ENCODE measurements at regions of chr4 and their contacts with region 1.

Region 1: DNA sequence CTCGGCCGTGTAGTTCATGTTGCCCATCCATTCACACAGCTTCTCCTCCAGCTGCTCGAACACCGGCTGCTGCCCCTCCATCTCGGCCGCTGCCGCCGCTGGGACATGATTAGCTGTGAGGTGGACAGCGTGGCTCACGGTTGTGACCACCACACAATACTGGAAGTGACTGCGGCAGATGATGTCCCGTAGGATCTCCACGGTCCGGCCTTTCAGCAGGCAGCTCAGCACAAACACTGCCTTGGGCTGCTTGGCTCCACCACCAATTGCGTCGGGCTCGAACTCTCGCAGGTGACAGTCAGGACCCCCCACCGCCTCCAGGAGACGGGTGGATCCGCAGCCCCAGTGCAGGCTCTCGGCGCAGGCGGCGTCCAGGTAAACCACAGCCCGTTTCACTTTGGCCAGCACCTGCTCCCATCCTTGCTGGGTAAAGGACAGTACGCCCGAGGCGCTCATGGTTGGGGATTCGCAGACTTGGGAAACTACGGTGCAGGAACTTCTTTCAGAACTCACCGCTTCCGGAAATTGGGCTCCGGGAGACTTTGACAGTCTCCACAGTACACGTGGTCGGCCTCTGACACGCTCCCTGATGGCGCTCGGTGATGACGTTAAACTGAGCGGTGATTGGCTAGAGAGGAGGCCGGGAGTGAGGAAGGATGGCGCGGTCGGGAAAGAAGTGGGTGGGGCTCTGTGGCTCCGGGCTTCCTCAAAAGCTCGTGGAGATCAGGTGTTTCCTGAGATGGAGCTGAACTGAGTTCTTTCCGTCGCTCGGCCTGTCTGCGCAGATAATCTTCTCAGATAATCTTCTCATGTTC is at the start of gene SCFD2:
- DNase-seq: peak; percentile 90 to 99 (median 97)
- ATAC-seq: peak; percentile 96
- H3K4me3 ChIP-seq: peak within 1 kb of the TSS; percentile 69 to 77
- H3K4me3 Mint-ChIP-seq: peak within 1 kb of the TSS; percentile 96
- H3K27ac ChIP-seq: peak within 1 kb of the TSS; percentile 76 to 89
- H3K27ac Mint-ChIP-seq: peak within 1 kb of the TSS; percentile 97
- H3K4me1 ChIP-seq: peaks cover 46% of the 10 kb centered on the region
- H3K4me1 Mint-ChIP-seq: peaks cover 59% of the 10 kb centered on the region
- H3K27me3 ChIP-seq: peaks cover 0 to 4% of the 10 kb centered on the region in 2 experiments
- H3K27me3 Mint-ChIP-seq: peaks cover 5% of the 10 kb centered on the region
- CTCF ChIP-seq: no peak
- total RNA-seq, gene SCFD2: 11.0 to 13.7 TPM

Region 2: GRCh38 chr4:52038103-52038912 is 1327.4 kb before region 1 on chr4 and contains the start of gene SGCB:
- CTCF ChIA-PET with region 1: no interaction called
- POLR2A ChIA-PET with region 1: no interaction called
- intact Hi-C with region 1: loop called in 1 of 2 experiments (anchors 5 kb)
- DNase-seq: peak; percentile 29 to 83 (median 72)
- ATAC-seq: peak; percentile 94
- H3K4me3 ChIP-seq: peak within 1 kb of the TSS; percentile 67 to 74
- H3K4me3 Mint-ChIP-seq: peak within 1 kb of the TSS; percentile 85
- H3K27ac ChIP-seq: no peak within 1 kb of the TSS
- H3K27ac Mint-ChIP-seq: peak within 1 kb of the TSS; percentile 19
- H3K4me1 ChIP-seq: peaks cover 14% of the 10 kb centered on the region
- H3K4me1 Mint-ChIP-seq: peaks cover 26% of the 10 kb centered on the region
- H3K27me3 ChIP-seq: no peaks in the 10 kb centered on the region
- H3K27me3 Mint-ChIP-seq: peaks cover 11% of the 10 kb centered on the region
- CTCF ChIP-seq: no peak
- total RNA-seq, gene SGCB: 3.0 to 3.1 TPM

Region 3: DNA sequence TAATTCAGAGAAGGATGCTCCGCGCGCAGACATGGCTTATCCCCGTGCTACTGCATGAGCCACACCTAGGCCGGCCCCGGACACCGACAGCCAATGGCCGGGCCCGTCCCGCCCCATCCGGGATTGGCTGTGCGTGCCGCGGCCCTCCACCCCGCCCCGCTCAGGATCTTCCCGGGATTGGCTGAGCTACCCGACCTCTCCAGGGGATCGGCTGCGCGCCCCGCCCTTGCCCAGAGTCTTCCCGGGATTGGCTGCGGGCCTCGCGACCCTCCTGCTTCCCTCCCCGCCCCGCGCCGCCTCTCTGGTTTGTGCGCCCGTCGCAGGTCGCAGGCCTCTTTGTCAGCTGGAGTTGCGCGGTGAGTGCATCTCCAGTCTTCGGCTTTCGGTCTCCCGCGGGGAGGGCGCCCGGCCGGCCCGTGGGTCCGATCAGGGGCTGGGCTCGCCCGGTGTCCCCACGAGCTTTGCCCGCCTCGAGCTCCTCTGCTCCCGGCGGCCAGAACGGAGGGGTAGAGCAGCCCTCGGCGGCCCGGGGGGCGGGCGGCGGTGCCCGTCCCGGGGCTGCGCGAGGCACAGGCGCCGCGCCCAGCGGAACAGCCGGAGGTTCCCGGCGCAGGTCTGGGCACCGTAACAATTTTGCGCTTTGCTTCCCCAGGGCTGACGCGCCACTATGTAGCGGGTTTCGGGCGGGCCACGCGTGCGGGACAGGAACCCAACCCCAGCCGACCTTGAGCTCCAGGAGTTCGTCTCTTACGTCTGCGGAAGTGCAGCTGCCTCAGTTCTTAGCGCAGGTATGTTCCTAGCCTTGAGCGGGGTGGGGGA is 653.3 kb before region 1 on chr4:
- CTCF ChIA-PET with region 1: no interaction called
- POLR2A ChIA-PET with region 1: no interaction called
- intact Hi-C with region 1: loop called (anchors 2 to 5 kb)
- DNase-seq: peak; percentile 90 to 97 (median 95)
- ATAC-seq: peak; percentile 89
- H3K4me3 ChIP-seq: peak overlapping the region; percentile 58 to 76
- H3K4me3 Mint-ChIP-seq: peak overlapping the region; percentile 92
- H3K27ac ChIP-seq: peak overlapping the region; percentile 82 to 89
- H3K27ac Mint-ChIP-seq: peak overlapping the region; percentile 96
- H3K4me1 ChIP-seq: peaks cover 29% of the 10 kb centered on the region
- H3K4me1 Mint-ChIP-seq: peaks cover 43% of the 10 kb centered on the region
- H3K27me3 ChIP-seq: no peaks in the 10 kb centered on the region
- H3K27me3 Mint-ChIP-seq: no peaks in the 10 kb centered on the region
- CTCF ChIP-seq: no peak

Region 4: GRCh38 chr4:52721968-52722815 is 643.5 kb before region 1 on chr4:
- CTCF ChIA-PET with region 1: no interaction called
- POLR2A ChIA-PET with region 1: no interaction called
- intact Hi-C with region 1: loop called (anchors 1 to 5 kb)
- DNase-seq: peak; percentile 74 to 97 (median 89)
- ATAC-seq: peak; percentile 97
- H3K4me3 ChIP-seq: peak overlapping the region; percentile 76 to 87
- H3K4me3 Mint-ChIP-seq: peak overlapping the region; percentile 85
- H3K27ac ChIP-seq: peak overlapping the region; percentile 67 to 90
- H3K27ac Mint-ChIP-seq: peak overlapping the region; percentile 90
- H3K4me1 ChIP-seq: peaks cover 9% of the 10 kb centered on the region
- H3K4me1 Mint-ChIP-seq: peaks cover 11% of the 10 kb centered on the region
- H3K27me3 ChIP-seq: no peaks in the 10 kb centered on the region
- H3K27me3 Mint-ChIP-seq: peaks cover 5% of the 10 kb centered on the region
- CTCF ChIP-seq: no peak

Region 5: DNA sequence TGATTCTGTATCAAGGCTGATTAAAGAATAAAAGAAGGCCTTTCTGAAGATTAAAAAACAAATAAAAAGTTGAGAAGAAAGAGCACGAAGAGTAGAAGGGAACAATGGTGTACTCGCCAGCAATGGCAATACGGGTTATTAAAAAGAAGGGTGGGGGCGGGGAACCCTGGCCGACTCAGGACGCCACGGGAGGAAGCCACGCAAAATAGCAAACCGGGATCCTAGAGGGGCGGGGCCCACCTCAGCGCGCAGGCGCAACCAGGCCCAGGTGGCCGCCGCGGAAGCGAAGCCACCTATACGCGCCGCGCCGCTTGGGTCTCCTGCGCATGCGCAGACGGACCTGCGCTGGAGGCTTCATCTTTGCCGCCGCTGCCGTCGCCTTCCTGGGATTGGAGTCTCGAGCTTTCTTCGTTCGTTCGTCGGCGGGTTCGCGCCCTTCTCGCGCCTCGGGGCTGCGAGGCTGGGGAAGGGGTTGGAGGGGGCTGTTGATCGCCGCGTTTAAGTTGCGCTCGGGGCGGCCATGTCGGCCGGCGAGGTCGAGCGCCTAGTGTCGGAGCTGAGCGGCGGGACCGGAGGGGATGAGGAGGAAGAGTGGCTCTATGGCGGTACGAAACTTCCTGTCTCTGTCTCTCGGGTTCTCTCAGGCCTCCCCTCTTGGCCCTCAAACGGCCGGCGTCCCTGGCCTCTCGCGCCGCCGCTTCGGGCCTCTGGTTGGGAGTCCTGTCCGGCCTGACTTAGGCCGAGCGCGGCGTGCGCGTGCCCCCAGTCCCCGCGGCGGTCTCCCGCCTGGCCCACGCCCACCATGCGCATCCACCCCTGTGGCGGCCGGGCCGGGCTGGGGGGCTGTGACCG is 11.9 kb after region 1 on chr4 and contains the start of gene FIP1L1:
- CTCF ChIA-PET with region 1: interaction called, 5 read pairs
- POLR2A ChIA-PET with region 1: interaction called, 6 read pairs
- intact Hi-C with region 1: loop called (anchors 1 kb)
- DNase-seq: peak; percentile 90 to 98 (median 96)
- ATAC-seq: peak; percentile 92
- H3K4me3 ChIP-seq: peak within 1 kb of the TSS; percentile 68 to 96
- H3K4me3 Mint-ChIP-seq: peak within 1 kb of the TSS; percentile 100
- H3K27ac ChIP-seq: peak within 1 kb of the TSS; percentile 84 to 90
- H3K27ac Mint-ChIP-seq: peak within 1 kb of the TSS; percentile 99
- H3K4me1 ChIP-seq: peaks cover 26% of the 10 kb centered on the region
- H3K4me1 Mint-ChIP-seq: peaks cover 40% of the 10 kb centered on the region
- H3K27me3 ChIP-seq: peaks cover 0 to 2% of the 10 kb centered on the region in 2 experiments
- H3K27me3 Mint-ChIP-seq: peaks cover 2% of the 10 kb centered on the region
- CTCF ChIP-seq: no peak
- total RNA-seq, gene FIP1L1: 56.9 to 59.9 TPM

Region 6: DNA sequence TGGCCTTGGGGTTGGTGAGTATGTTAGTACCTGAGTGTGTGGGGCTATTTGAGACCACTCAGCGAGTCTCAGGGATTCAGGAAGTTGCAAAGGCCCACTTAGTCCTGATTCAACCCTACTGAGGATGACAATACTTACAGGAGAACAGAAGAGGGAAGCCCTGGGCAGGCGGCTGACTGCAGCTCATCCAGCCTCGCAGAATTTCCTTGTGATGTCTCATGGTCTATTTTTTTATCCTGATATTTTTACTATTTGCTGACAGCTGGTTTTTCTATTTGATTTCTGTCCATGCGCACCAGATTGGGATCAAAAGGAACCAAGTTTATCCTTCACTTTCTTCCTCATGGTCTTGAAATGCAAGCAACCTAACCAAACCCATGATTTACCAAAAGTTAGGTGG is 427.4 kb after region 1 on chr4:
- CTCF ChIA-PET with region 1: no interaction called
- POLR2A ChIA-PET with region 1: no interaction called
- intact Hi-C with region 1: no loop called
- DNase-seq: no peak
- ATAC-seq: no peak
- H3K4me3 ChIP-seq: no peak overlapping the region
- H3K4me3 Mint-ChIP-seq: no peak overlapping the region
- H3K27ac ChIP-seq: no peak overlapping the region
- H3K27ac Mint-ChIP-seq: no peak overlapping the region
- H3K4me1 ChIP-seq: no peaks in the 10 kb centered on the region
- H3K4me1 Mint-ChIP-seq: no peaks in the 10 kb centered on the region
- H3K27me3 ChIP-seq: peaks cover 0 to 2% of the 10 kb centered on the region in 2 experiments
- H3K27me3 Mint-ChIP-seq: peaks cover 17% of the 10 kb centered on the region
- CTCF ChIP-seq: no peak

Region 7: GRCh38 chr4:54941994-54942552 is 1576.4 kb after region 1 on chr4:
- CTCF ChIA-PET with region 1: no interaction called
- POLR2A ChIA-PET with region 1: no interaction called
- intact Hi-C with region 1: loop called in 1 of 2 experiments (anchors 10 kb)
- DNase-seq: peak; percentile 18 to 78 (median 34)
- ATAC-seq: peak; percentile 79
- H3K4me3 ChIP-seq: peak overlapping the region in 1 of 2 experiments; percentile 12
- H3K4me3 Mint-ChIP-seq: peak overlapping the region; percentile 71
- H3K27ac ChIP-seq: peak overlapping the region; percentile 59 to 72
- H3K27ac Mint-ChIP-seq: peak overlapping the region; percentile 98
- H3K4me1 ChIP-seq: peaks cover 40% of the 10 kb centered on the region
- H3K4me1 Mint-ChIP-seq: peaks cover 56% of the 10 kb centered on the region
- H3K27me3 ChIP-seq: no peaks in the 10 kb centered on the region
- H3K27me3 Mint-ChIP-seq: no peaks in the 10 kb centered on the region
- CTCF ChIP-seq: no peak